ENCODE measurements at regions of chr12 and their contacts with region 1.

Region 1: DNA sequence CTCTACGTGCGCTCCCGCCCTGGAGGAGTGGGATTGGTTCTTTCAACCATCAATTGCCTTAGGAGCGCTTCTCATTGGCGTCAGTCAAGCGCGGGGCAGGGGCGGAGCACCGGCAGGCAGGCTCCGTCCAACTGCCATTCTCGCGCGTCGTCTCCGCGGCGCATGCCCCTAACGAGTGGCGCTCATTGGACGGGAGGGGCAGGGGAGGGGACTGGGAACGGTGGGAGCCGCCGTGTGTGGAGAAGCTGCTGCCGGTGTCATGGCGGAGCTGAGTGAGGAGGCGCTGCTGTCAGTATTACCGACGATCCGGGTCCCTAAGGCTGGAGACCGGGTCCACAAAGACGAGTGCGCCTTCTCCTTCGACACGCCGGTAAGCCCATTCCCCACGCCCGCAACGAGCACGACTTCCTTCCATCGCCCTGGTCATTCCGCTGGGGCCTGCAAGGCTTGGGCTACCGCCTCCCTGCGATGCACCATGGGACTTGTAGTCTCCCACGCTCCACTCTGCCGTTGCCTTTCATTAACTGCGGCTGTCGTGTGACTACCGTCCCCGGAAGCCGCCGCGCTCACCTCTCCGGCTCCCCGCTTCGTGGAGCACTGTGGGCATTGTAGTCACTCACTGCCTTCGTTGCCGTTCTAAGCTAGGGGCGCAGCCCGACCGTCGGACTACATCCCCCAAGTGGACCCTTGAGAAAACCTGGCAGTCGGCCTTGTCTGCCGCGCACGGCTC is at the start of gene USP5:
- DNase-seq: peak; percentile 99
- ATAC-seq: peak; percentile 80
- H3K4me3 Mint-ChIP-seq: peak within 1 kb of the TSS; percentile 93
- H3K27ac Mint-ChIP-seq: peak within 1 kb of the TSS; percentile 99
- H3K4me1 Mint-ChIP-seq: peaks cover 21% of the 10 kb centered on the region
- H3K27me3 Mint-ChIP-seq: no peaks in the 10 kb centered on the region
- total RNA-seq, gene USP5: 128 to 132 TPM

Region 2: DNA sequence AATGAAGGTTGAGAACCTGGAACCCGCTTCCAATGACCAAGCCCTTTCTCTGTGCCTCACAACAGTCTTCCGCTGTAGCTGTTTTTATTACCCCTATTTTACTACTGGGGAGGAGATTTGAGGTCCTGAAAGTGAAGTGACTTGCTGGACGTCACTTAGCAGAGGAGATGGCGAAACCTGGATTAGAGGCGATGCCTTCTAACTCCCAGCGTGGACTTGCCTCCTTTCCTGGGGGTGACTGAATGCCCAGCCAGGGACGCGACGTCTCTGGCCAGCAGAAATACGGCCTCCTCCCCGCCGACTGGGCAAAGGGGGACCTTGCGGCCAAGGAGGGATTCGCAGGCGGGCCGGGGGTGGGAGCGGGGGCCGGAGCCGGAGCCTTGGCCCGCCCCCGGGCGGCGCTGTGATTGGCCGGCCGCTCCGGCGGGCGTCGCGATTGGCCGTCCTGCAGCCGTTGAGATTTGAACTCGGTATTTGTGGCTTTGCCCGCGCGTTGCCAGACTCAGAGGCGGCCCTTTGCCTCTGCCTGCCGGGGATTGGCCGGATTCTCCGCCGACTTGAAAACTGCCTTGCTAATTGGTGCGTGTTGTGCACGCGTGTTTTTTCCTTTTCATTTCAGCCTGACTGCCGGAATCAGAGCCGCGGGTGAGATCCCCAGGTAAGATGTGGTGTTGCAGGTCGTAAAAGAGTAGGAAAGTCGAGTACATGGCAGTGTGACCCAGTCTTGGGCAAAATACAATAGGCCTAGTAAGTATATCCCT is 358.4 kb before region 1 on chr12 and contains the start of gene NCAPD2:
- CTCF ChIA-PET with region 1: no interaction called
- POLR2A ChIA-PET with region 1: interaction called, 3 read pairs
- intact Hi-C with region 1: loop called in 1 of 2 experiments (anchors 1 kb)
- DNase-seq: peak; percentile 98
- ATAC-seq: peak; percentile 89
- H3K4me3 Mint-ChIP-seq: peak within 1 kb of the TSS; percentile 94
- H3K27ac Mint-ChIP-seq: peak within 1 kb of the TSS; percentile 98
- H3K4me1 Mint-ChIP-seq: peaks cover 35% of the 10 kb centered on the region
- H3K27me3 Mint-ChIP-seq: no peaks in the 10 kb centered on the region
- total RNA-seq, gene NCAPD2: 199 to 210 TPM

Region 3: GRCh38 chr12:6607751-6608591 is 244.1 kb before region 1 on chr12:
- CTCF ChIA-PET with region 1: no interaction called
- POLR2A ChIA-PET with region 1: interaction called, 4 read pairs
- intact Hi-C with region 1: loop called in 1 of 2 experiments (anchors 1 kb)
- DNase-seq: peak; percentile 84
- ATAC-seq: peak; percentile 60
- H3K4me3 Mint-ChIP-seq: no peak overlapping the region
- H3K27ac Mint-ChIP-seq: no peak overlapping the region
- H3K4me1 Mint-ChIP-seq: peaks cover 52% of the 10 kb centered on the region
- H3K27me3 Mint-ChIP-seq: no peaks in the 10 kb centered on the region

Region 4: GRCh38 chr12:6752921-6753771 is 98.9 kb before region 1 on chr12 and contains the start of gene MLF2:
- CTCF ChIA-PET with region 1: interaction called, 11 read pairs
- POLR2A ChIA-PET with region 1: interaction called, 3 read pairs
- intact Hi-C with region 1: loop called in 1 of 2 experiments (anchors 1 kb)
- DNase-seq: peak; percentile 99
- ATAC-seq: peak; percentile 96
- H3K4me3 Mint-ChIP-seq: peak within 1 kb of the TSS; percentile 87
- H3K27ac Mint-ChIP-seq: peak within 1 kb of the TSS; percentile 97
- H3K4me1 Mint-ChIP-seq: peaks cover 26% of the 10 kb centered on the region
- H3K27me3 Mint-ChIP-seq: no peaks in the 10 kb centered on the region
- total RNA-seq, gene MLF2: 142 to 144 TPM

Region 5: DNA sequence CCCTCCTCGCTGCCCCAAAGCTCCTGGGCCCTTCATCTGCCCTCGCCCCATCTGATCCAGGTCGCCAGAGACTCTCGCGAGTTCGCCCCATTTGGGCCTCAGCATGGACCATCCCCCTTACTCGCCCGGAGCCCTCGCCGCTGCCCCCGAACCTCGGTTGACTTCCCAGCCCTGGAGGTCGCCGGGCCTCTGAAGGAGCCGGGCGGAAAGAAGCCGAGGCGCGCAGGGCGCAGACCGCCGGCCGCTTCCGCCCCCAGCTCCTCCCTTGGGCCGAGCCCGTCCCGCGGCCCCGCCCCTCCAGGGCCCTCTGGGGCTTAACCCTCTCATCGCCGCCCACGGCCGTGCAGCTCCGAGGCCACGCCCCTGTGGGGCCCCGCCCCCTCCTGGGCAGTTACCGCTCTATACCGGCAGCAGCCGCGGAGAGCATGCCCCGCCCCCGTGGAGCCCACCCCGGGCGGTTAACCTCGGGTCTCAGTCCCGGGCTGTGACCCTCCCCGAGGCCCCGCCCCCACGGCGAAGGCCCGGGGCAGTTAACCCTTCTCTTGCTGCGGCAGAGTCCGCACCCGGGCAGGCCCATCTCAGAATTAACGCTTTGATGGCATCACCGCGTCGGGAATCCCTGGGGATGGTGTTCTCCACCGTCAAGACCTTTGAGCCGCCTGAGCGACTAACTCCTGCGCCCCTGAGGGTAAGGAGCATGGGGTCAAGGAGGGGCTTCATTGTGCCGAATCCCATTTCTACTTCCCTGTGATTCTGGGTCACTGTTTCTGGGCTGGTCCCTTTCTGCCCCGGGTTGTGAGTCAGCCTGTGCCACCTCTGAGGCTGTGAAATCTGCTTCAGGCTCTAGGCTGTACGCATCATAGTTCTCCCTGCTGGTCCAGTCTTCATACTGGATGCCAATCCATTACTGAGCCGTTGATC is 21.3 kb after region 1 on chr12 and contains the start of gene SPSB2:
- CTCF ChIA-PET with region 1: interaction called, 51 read pairs
- POLR2A ChIA-PET with region 1: interaction called, 65 read pairs
- intact Hi-C with region 1: loop called (anchors 1 kb)
- DNase-seq: peak; percentile 100
- ATAC-seq: peak; percentile 74
- H3K4me3 Mint-ChIP-seq: peak within 1 kb of the TSS; percentile 93
- H3K27ac Mint-ChIP-seq: peak within 1 kb of the TSS; percentile 86
- H3K4me1 Mint-ChIP-seq: peaks cover 50% of the 10 kb centered on the region
- H3K27me3 Mint-ChIP-seq: no peaks in the 10 kb centered on the region
- total RNA-seq, gene SPSB2: 1.7 to 2.2 TPM

Region 6: DNA sequence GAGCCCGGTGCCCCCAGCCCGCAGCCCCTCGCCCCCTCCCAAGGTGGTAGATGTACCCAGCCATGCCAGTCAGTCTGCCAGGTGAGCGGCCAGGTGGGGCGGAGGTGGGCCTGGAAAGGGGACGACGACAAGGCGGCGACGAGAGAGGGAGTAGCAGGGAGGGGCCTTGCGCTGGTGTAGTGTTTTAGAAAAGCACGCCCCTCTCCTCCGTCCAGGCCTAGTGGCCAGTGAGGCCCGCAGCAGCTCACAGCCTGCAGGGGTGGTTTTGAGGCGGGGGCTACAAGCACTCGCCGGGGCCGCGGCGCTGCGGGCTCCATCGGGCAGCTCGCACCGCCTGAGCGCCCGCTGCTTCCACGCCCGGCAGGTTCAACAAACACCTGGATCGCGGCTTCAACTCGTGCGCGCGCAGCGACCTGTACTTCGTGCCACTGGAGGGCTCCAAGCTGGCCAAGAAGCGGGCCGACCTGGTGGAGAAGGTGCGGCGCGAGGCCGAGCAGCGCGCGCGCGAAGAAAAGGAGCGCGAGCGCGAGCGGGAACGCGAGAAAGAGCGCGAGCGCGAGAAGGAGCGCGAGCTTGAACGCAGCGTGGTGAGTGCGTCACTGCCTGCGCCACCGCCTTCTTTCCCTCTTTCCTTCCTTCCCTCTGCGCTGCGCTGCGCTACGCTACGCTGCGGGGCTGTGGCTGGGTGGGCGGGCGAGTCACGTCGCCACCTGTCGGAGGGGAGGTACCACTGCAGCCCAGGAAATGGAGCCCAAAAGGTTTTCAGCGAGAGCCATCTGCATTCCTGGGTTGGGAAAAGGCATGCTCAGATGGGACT is 85.6 kb after region 1 on chr12:
- CTCF ChIA-PET with region 1: interaction called, 4 read pairs
- POLR2A ChIA-PET with region 1: interaction called, 11 read pairs
- intact Hi-C with region 1: loop called (anchors 1 to 5 kb)
- DNase-seq: peak; percentile 97
- ATAC-seq: peak; percentile 93
- H3K4me3 Mint-ChIP-seq: peak overlapping the region; percentile 83
- H3K27ac Mint-ChIP-seq: peak overlapping the region; percentile 96
- H3K4me1 Mint-ChIP-seq: peaks cover 52% of the 10 kb centered on the region
- H3K27me3 Mint-ChIP-seq: no peaks in the 10 kb centered on the region

Region 7: DNA sequence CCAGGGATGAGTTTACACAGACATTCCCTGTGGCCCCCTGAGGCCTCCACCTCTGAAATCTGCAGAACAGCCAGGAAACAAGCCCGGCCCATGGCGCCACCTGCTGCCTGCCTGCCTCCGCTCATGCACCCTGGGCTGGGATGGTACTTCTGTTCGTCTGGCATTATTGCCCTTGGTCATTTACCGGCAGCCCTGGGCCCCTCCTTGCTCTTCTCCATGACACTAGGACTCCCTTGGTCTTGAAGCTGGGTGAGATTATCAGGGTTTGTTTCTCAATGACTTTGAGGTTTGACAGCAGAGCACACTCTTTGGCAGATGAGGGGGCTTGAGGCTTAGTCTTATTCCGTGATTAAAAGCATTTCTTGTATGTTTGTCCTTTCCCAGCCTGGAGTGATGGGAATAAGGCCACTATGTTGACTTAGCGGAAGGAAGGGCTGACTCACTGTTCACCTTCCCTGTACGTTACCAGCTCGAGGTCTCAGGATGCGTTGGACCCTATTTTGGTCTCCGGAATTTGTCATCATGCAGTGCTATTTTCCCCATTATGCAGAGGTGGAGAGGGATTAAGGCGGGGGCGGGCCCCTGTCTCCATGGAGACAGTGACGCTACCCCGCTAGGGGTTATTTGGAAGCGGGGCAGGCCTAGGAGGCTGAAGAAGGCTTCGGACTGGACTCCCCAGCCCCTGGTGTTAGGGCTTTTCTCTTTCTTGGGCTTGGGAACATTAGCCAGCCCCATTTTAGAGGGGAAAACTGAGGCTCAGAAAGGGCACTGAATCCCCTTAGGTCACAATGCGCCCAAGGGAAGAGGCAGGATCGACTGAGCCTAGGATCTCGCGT is 336.7 kb after region 1 on chr12:
- CTCF ChIA-PET with region 1: no interaction called
- POLR2A ChIA-PET with region 1: no interaction called
- intact Hi-C with region 1: loop called in 1 of 2 experiments (anchors 1 kb)
- DNase-seq: peak; percentile 88
- ATAC-seq: peak; percentile 64
- H3K4me3 Mint-ChIP-seq: peak overlapping the region; percentile 85
- H3K27ac Mint-ChIP-seq: peak overlapping the region; percentile 94
- H3K4me1 Mint-ChIP-seq: peaks cover 35% of the 10 kb centered on the region
- H3K27me3 Mint-ChIP-seq: no peaks in the 10 kb centered on the region